ENCODE measurements at regions of chr7 and their contacts with region 1.

Region 1: GRCh38 chr7:2709553-2710285 is 21.7 kb downstream of the AMZ1 start:
- DNase-seq: peak in 9 of 10 donors; percentile 36 to 97 (median 66)

Region 2: GRCh38 chr7:2670720-2671391 is 38.9 kb before region 1 on chr7:
- intact Hi-C with region 1: loop called (anchors 1 kb)
- DNase-seq: peak in 8 of 10 donors; percentile 63 to 96 (median 72)

Measured in posterior cingulate gyrus (tissue), 11 donors.